ENCODE measurements at regions of chr7 and their contacts with region 1.

Region 1: GRCh38 chr7:35906191-35906908 is 105.5 kb downstream of the SEPTIN7 start:
- DNase-seq: peak; percentile 32 to 75 (median 54)
- ATAC-seq: peak; percentile 95
- H3K4me3 ChIP-seq: no peak overlapping the region
- H3K27ac ChIP-seq: no peak overlapping the region
- H3K4me1 ChIP-seq: no peaks in the 10 kb centered on the region
- H3K27me3 ChIP-seq: no peaks in the 10 kb centered on the region; a peak in 1 of 5 replicates
- CTCF ChIP-seq: peak; percentile 71 to 89 (median 79)
- EP300 ChIP-seq: no peak
- POLR2A ChIP-seq: 0 out of 2 replicates have a peak, but pooled peaks have one; percentile 31
- RAD21 ChIP-seq: peak; percentile 87 to 88

Region 2: DNA sequence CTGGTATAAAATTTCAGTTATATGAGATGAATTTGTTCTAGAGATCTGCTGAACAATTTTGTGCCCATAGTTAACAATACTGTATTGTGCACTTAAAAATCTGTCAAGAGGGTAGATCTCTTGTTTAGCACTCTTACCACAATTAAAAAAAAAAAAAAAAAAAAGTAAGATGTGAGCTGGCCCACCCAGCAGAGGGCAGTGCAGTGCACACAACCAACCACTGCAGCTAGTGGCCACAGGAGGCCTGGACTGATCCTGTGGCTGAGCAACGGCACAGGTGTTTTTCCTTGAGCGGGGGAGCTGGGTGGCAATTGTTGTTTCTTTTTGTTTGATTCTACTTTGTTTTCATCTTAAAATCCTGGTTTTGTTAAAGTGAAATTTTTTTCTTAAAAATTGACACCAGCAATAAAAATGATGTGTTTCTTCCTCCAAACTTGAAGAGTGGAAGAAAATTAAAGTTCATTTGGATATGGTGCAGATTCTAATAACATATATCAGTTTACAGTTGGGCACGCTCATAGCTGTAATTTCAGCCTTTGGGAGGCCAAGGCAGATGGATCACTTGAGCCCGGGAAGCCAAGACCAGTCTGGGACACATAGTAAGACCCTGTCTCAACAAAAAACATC is 481.4 kb before region 1 on chr7:
- CTCF ChIA-PET with region 1: interaction called, 3 read pairs
- POLR2A ChIA-PET with region 1: no interaction called
- in situ Hi-C with region 1: no loop called
- intact Hi-C with region 1: loop called (anchors 5 kb)
- DNase-seq: peak; percentile 58 to 67 (median 66)
- ATAC-seq: peak; percentile 90
- H3K4me3 ChIP-seq: no peak overlapping the region
- H3K27ac ChIP-seq: no peak overlapping the region
- H3K4me1 ChIP-seq: no peaks in the 10 kb centered on the region
- H3K27me3 ChIP-seq: peaks cover 0 to under 1% of the 10 kb centered on the region in 2 experiments; a peak in 1 of 5 replicates
- CTCF ChIP-seq: peak; percentile 68 to 98 (median 90); a peak in 5 of 6 replicates
- EP300 ChIP-seq: no peak
- POLR2A ChIP-seq: no peak
- RAD21 ChIP-seq: peak; percentile 38 to 60

Region 3: DNA sequence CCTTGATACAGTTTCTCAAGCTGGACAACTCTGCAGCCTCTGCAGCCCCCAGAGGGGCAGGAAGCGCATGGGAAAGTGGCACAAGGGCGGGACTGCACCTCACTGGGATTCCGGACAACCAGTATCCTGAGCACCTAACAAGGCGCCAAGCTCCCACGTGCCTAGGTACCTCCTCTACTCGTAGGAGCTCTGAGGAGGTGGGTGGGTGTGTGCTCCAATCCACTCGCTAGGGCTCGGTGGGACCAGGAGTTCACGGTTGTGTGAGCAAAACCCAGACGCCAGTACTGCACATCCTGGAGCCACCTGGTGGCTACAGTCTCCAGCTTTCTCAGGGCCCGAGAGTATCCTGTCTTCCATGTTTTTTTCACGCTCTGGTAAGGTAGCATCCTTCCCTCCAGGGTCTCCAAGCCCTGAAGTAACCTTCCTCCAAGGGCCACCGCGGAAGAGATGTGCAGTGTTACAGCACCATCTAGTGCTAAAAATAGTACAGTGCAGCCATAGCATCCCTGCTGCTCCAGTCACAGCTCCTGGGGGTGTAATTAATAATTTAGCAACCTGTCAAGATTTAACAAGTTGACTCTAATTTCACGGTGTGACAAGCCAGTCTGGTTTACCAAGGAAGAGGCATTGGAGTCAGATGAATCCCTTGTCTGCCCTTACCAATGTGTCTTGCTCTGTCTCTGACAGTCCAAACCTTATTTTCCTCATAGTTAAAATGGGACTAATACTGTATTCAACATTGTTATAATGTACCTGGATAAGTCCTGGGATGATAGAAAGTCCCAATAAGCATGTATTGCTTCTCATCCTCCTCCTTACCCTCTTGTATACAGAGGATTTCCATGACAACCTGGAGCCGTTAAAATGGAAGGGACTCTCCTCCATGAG is 281.8 kb before region 1 on chr7:
- CTCF ChIA-PET with region 1: no interaction called
- POLR2A ChIA-PET with region 1: no interaction called
- in situ Hi-C with region 1: no loop called
- intact Hi-C with region 1: loop called (anchors 10 kb)
- DNase-seq: peak; percentile 65 to 72 (median 70)
- ATAC-seq: peak; percentile 97
- H3K4me3 ChIP-seq: no peak overlapping the region
- H3K27ac ChIP-seq: no peak overlapping the region
- H3K4me1 ChIP-seq: no peaks in the 10 kb centered on the region
- H3K27me3 ChIP-seq: peaks cover 2 to 8% of the 10 kb centered on the region in 2 experiments; a peak in 2 of 5 replicates
- CTCF ChIP-seq: peak; percentile 81 to 89 (median 88)
- EP300 ChIP-seq: no peak
- POLR2A ChIP-seq: no peak
- RAD21 ChIP-seq: peak; percentile 78 to 84

Region 4: GRCh38 chr7:35707422-35707821 is 198.9 kb before region 1 on chr7:
- CTCF ChIA-PET with region 1: interaction called, 38 read pairs
- POLR2A ChIA-PET with region 1: interaction called, 3 read pairs
- in situ Hi-C with region 1: loop called (anchors 5 kb)
- intact Hi-C with region 1: loop called (anchors 1 kb)
- DNase-seq: no peak
- ATAC-seq: no peak
- H3K4me3 ChIP-seq: no peak overlapping the region
- H3K27ac ChIP-seq: no peak overlapping the region
- H3K4me1 ChIP-seq: no peaks in the 10 kb centered on the region
- H3K27me3 ChIP-seq: peaks cover 2 to 13% of the 10 kb centered on the region in 2 experiments; a peak in 2 of 5 replicates
- CTCF ChIP-seq: no peak
- EP300 ChIP-seq: no peak
- POLR2A ChIP-seq: no peak
- RAD21 ChIP-seq: no peak

Region 5: DNA sequence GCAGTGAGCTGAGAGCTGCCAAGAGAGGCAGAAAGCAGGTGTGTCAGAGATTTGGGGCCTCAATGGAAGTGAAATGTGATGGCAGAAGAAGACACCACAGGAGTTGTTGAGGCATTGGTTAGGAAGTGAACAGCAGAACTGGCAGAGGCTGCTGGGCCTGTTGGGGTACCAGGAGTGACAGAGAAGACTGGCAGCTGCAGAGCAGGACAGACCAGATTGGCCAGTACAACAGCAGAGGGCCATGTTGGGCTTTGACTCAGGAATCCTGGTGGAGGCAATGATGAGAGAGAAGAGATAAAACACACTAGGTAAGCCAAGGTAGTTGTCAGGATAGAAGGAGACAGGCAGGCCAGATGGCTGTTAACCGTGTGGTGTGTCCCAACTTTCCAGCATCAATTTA is 191.5 kb before region 1 on chr7:
- CTCF ChIA-PET with region 1: interaction called, 38 read pairs
- POLR2A ChIA-PET with region 1: interaction called, 3 read pairs
- in situ Hi-C with region 1: no loop called
- intact Hi-C with region 1: no loop called
- DNase-seq: no peak
- ATAC-seq: peak; percentile 65; the same call in 2 of the 3 replicates
- H3K4me3 ChIP-seq: no peak overlapping the region
- H3K27ac ChIP-seq: no peak overlapping the region
- H3K4me1 ChIP-seq: no peaks in the 10 kb centered on the region
- H3K27me3 ChIP-seq: peaks cover 12 to 17% of the 10 kb centered on the region in 2 experiments
- CTCF ChIP-seq: peak in 2 of 3 experiments; percentile 7 to 32; a peak in 2 of 6 replicates
- EP300 ChIP-seq: no peak
- POLR2A ChIP-seq: no peak
- RAD21 ChIP-seq: peak; percentile 52 to 53

Region 6: GRCh38 chr7:35801392-35802101 is 104.8 kb before region 1 on chr7:
- CTCF ChIA-PET with region 1: interaction called, 3 read pairs
- POLR2A ChIA-PET with region 1: interaction called, 4 read pairs
- in situ Hi-C with region 1: no loop called
- intact Hi-C with region 1: loop called (anchors 1 kb)
- DNase-seq: peak; percentile 48 to 68 (median 56)
- ATAC-seq: peak; percentile 73
- H3K4me3 ChIP-seq: peak overlapping the region; percentile 93
- H3K27ac ChIP-seq: peak overlapping the region; percentile 97
- H3K4me1 ChIP-seq: peaks cover 3 to 12% of the 10 kb centered on the region in 2 experiments; a peak in 3 of 5 replicates
- H3K27me3 ChIP-seq: no peaks in the 10 kb centered on the region
- CTCF ChIP-seq: peak; percentile 45 to 62 (median 60); a peak in 5 of 6 replicates
- EP300 ChIP-seq: no peak
- POLR2A ChIP-seq: no peak
- RAD21 ChIP-seq: peak; percentile 38 to 51; a peak in 3 of 4 replicates

Region 7: DNA sequence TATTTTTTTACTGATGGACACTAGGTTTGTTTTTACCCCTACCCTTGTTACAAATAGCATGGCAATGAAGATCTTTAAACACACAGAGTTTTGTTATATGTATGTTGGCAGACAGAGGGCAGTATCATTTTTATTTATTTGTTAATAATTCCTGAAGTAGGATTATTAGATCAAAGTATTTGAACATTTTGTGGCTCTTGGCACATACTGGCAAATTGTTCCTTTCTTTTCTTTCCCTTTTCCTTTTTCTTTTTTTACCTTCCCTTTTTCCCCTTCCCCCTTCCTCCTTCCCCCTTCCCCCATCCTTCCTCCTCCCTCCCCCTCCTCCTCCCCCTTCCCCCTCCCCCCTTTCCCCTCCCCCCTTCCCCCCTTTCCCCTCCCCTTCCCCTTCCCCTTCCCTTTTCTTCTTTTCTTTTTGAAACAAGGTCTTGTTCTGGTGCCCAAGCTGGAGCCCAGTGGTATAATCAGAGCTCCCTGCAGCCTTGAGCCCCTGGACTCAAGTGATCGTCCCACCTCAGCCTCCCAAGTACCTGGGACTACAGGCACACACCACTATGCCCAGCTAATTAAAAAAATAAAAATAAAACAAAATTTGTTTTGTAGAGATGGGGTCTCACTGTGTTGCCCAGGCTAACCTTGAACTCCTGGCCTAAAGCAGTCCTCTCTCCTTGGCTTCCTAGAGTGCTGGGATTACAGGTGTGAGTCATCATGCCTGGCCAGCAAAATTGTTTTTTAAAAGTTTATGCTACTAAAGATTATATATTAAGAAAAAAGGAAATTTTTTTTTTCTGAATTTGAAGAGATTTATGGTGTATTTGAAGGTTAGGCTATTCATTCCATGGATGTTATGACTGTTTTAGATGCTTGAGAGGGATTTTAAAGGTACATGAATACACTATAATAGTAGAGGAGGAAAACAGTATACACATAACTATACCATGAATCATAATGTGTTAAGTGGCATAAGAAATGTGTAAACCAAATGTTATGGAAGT is 66.2 kb before region 1 on chr7:
- CTCF ChIA-PET with region 1: no interaction called
- POLR2A ChIA-PET with region 1: no interaction called
- in situ Hi-C with region 1: no loop called
- intact Hi-C with region 1: no loop called
- DNase-seq: no peak
- ATAC-seq: no peak
- H3K4me3 ChIP-seq: no peak overlapping the region
- H3K27ac ChIP-seq: no peak overlapping the region
- H3K4me1 ChIP-seq: no peaks in the 10 kb centered on the region
- H3K27me3 ChIP-seq: no peaks in the 10 kb centered on the region
- CTCF ChIP-seq: no peak
- EP300 ChIP-seq: no peak
- POLR2A ChIP-seq: no peak
- RAD21 ChIP-seq: no peak

Region 8: DNA sequence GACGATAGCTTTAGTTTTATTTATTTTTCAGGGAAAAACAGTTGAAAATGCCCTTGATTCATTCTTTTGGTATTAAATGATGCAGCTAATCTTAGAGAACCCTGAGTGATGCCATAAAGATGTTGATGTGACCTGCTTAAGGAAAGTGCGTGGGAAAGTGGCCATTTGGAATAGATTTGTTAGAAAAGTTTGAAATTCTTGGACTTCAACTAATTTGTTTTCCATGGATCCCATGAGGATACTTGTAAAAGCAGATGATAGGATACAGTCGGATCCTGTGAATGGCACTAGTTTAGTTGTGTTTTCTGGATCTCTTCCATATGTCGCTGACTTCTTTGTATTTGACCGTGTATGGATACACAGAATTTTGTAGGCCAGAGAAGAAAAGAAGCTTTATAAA is 36.5 kb before region 1 on chr7:
- CTCF ChIA-PET with region 1: no interaction called
- POLR2A ChIA-PET with region 1: no interaction called
- in situ Hi-C with region 1: no loop called
- intact Hi-C with region 1: no loop called
- DNase-seq: no peak
- ATAC-seq: no peak
- H3K4me3 ChIP-seq: no peak overlapping the region
- H3K27ac ChIP-seq: no peak overlapping the region
- H3K4me1 ChIP-seq: no peaks in the 10 kb centered on the region
- H3K27me3 ChIP-seq: no peaks in the 10 kb centered on the region
- CTCF ChIP-seq: no peak
- EP300 ChIP-seq: no peak
- POLR2A ChIP-seq: no peak
- RAD21 ChIP-seq: no peak

Region 9: DNA sequence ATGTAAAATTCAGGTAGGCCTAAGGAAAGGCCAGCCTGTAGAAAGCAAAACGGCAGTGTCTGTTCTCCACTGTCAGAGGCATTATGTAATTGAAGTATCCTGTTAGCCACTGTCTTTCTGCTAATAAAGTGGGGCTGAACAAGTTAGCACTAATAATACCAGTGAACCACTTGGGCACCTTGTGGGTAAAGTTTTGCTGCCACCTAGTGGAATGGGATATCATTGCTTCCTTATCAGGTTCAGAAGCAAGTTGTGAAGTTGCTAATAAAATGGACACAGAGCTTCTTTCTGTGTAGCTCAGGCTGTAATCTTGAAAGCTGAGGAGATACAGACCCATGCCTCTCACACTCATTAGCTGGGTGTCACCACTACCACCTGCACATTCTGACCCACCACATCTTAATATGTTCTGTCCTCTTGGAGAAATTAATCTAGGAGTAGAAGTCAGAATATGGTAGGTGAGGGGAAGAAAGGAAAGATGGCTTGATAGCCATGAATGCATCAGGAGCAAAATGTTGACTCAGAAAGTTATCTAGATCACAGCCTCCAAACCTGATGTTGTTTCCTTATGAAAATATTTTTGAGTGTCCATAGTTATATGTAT is 69.6 kb after region 1 on chr7:
- CTCF ChIA-PET with region 1: no interaction called
- POLR2A ChIA-PET with region 1: no interaction called
- in situ Hi-C with region 1: loop called (anchors 10 kb)
- intact Hi-C with region 1: no loop called
- DNase-seq: peak; percentile 36 to 76 (median 38)
- ATAC-seq: peak; percentile 84
- H3K4me3 ChIP-seq: no peak overlapping the region
- H3K27ac ChIP-seq: no peak overlapping the region
- H3K4me1 ChIP-seq: peaks cover 0 to 8% of the 10 kb centered on the region in 2 experiments; a peak in 2 of 5 replicates
- H3K27me3 ChIP-seq: peaks cover 6 to 15% of the 10 kb centered on the region in 2 experiments; a peak in 4 of 5 replicates
- CTCF ChIP-seq: peak; percentile 73 to 83 (median 77)
- EP300 ChIP-seq: no peak
- POLR2A ChIP-seq: no peak
- RAD21 ChIP-seq: peak; percentile 80 to 90

Measured in K562 (cell line).